Calu3 (cell line): ENCODE measurements at regions of chr11 and their contacts with region 1.

Region 1: GRCh38 chr11:134261626-134262488 is 8.5 kb downstream of the ACAD8 start:
- DNase-seq: peak; percentile 57
- H3K4me3 Mint-ChIP-seq: no peak overlapping the region
- H3K27ac Mint-ChIP-seq: no peak overlapping the region
- H3K4me1 Mint-ChIP-seq: peaks cover 10% of the 10 kb centered on the region
- H3K27me3 Mint-ChIP-seq: no peaks in the 10 kb centered on the region
- CTCF ChIP-seq: peak; percentile 47

Region 2: DNA sequence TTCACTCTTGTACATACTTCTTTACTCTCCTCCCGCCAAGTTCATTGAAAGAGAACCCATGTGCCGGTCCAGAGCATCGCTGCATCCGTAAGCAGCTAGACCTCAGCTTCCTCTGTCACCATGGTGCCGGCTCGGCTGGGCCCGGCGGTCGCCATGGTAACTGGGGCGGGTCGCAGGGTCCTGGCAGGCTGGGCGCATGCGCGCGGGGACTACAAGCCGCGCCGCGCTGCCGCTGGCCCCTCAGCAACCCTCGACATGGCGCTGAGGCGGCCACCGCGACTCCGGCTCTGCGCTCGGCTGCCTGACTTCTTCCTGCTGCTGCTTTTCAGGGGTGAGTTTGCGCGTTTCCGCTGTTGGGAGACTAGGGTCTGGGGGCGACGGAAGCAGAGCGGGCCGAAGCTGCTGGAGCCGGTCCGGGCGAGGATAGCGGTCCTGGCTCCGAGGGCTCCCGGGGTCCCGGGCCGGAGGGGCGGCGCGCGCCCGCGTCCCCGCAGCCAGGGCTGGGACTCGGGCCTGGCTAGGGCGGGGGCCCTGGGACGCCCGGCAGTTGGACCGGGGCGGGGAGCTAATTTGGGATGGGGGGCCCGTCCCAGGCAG is 192.9 kb before region 1 on chr11 and contains the start of gene JAM3:
- CTCF ChIA-PET with region 1: no interaction called
- intact Hi-C with region 1: no loop called
- DNase-seq: no peak
- H3K4me3 Mint-ChIP-seq: no peak within 1 kb of the TSS
- H3K27ac Mint-ChIP-seq: no peak within 1 kb of the TSS
- H3K4me1 Mint-ChIP-seq: no peaks in the 10 kb centered on the region
- H3K27me3 Mint-ChIP-seq: peaks cover 90% of the 10 kb centered on the region
- CTCF ChIP-seq: no peak
- total RNA-seq, gene JAM3: 0.22 TPM in 1 of 2 replicates, not detected in the other

Region 3: GRCh38 chr11:134196756-134197155 is 65.1 kb before region 1 on chr11:
- CTCF ChIA-PET with region 1: no interaction called
- intact Hi-C with region 1: no loop called
- DNase-seq: no peak
- H3K4me3 Mint-ChIP-seq: no peak overlapping the region
- H3K27ac Mint-ChIP-seq: no peak overlapping the region
- H3K4me1 Mint-ChIP-seq: no peaks in the 10 kb centered on the region
- H3K27me3 Mint-ChIP-seq: no peaks in the 10 kb centered on the region
- CTCF ChIP-seq: no peak

Region 4: GRCh38 chr11:134578807-134579723 is 317.2 kb after region 1 on chr11:
- CTCF ChIA-PET with region 1: interaction called, 3 read pairs
- intact Hi-C with region 1: loop called (anchors 10 kb)
- DNase-seq: peak; percentile 22
- H3K4me3 Mint-ChIP-seq: no peak overlapping the region
- H3K27ac Mint-ChIP-seq: no peak overlapping the region
- H3K4me1 Mint-ChIP-seq: no peaks in the 10 kb centered on the region
- H3K27me3 Mint-ChIP-seq: no peaks in the 10 kb centered on the region
- CTCF ChIP-seq: no peak